Esophagus muscularis mucosa (tissue), 4 donors: ENCODE measurements at regions of chr19 and their contacts with region 1.

Region 1: DNA sequence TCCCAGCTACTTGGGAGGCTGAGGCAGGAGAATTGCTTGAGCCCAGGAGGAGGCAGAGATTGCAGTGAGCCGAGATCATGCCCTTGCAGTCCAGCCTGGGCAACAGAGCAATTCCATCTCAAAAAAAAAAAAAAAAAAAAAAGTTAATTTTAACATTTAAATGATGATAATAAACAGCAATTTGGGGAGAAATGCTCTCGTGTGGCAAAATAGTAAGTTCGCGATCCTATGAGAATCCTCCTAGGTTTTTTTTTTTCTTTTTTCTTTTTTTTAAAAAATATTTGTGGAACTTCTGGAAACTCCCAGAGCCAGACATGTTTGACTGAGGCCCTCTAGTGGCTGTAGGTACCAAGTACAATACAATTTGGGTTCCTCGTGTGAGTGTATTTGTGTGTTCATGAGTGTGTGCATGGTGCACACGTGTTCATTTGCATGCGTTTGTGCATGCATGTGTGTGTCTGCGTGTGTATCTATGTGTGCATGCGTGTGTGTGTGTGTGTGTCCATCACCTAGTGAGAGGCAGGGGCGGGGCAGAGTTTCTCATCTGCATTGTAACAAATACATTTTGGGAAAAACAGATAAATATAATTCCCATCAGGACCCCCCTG is 31.2 kb downstream of the TMPRSS9 start:
- DNase-seq: no peak
- H3K4me3 ChIP-seq: no peak overlapping the region
- H3K27ac ChIP-seq: no peak overlapping the region
- H3K4me1 ChIP-seq: no peaks in the 10 kb centered on the region
- H3K27me3 ChIP-seq: peaks cover 0 to 46% (median under 1%) of the 10 kb centered on the region in 4 donors
- CTCF ChIP-seq: peak; percentile 75 to 84 (median 82)
- EP300 ChIP-seq: no peak
- POLR2A ChIP-seq: no peak

Region 2: DNA sequence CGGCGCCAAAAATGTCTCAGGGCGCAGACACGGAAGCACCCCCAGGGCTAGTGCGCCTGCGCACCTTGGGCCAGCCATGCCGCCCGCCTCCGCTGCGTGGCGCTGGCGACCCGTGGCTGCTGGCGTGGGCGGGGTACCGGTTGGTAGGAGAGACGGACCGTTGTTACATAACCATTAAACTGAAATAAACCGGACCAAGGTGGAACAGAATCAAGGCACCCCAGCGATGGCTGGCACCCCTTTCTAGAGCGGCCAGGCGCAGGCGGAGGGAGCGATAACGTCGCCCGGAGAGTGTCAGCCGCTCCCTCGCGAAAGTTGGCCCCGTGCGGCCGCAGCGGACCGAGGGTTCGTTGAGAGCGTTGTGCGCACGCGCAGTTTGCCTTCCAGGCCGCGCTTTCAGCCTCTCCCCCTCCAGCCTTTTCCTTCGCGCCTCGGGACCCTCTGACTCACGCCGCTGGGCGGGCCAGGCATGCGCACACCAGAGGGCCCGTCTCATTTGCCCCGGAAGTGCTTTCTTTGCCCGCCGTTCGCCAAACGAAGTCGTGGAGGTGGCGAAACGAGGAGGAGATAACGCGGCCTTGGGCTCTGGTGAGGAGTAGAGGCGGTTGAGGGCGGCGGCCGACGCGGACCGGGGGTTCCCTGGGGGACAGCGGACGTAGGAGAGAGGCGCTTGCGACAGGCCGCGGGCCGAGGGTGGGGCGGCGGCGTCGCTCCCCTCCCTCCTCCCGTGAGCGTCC is 154.7 kb before region 1 on chr19 and contains the starts of genes PLEKHJ1 and SF3A2:
- intact Hi-C with region 1: loop called (anchors 5 kb)
- DNase-seq: peak; percentile 99
- H3K4me3 ChIP-seq: peak within 1 kb of the TSS; percentile 88 to 100 (median 98)
- H3K27ac ChIP-seq: peak within 1 kb of the TSS; percentile 94 to 99 (median 96)
- H3K4me1 ChIP-seq: peaks cover 66 to 86% (median 71%) of the 10 kb centered on the region in 4 donors
- H3K27me3 ChIP-seq: no peaks in the 10 kb centered on the region
- CTCF ChIP-seq: peak; percentile 99 to 100 (median 100)
- EP300 ChIP-seq: no peak
- POLR2A ChIP-seq: peak; percentile 74
- total RNA-seq, gene PLEKHJ1: 41.9 to 69.8 (median 55.3) TPM
- total RNA-seq, gene SF3A2: 29.5 to 56.9 (median 35.3) TPM